ENCODE measurements at regions of chr7 and their contacts with region 1.

Region 1: GRCh38 chr7:28020302-28020940 is 160.2 kb downstream of the JAZF1 start:
- DNase-seq: peak; percentile 52 to 75 (median 64)
- ATAC-seq: peak; percentile 49 to 83 (median 76)
- H3K4me3 ChIP-seq: no peak overlapping the region
- H3K27ac ChIP-seq: no peak overlapping the region
- H3K4me1 ChIP-seq: peaks cover 0 to 49% (median 19%) of the 10 kb centered on the region in 12 donors
- H3K27me3 ChIP-seq: no peaks in the 10 kb centered on the region
- CTCF ChIP-seq: peak; percentile 81 to 92 (median 87)
- POLR2A ChIP-seq: no peak

Region 2: DNA sequence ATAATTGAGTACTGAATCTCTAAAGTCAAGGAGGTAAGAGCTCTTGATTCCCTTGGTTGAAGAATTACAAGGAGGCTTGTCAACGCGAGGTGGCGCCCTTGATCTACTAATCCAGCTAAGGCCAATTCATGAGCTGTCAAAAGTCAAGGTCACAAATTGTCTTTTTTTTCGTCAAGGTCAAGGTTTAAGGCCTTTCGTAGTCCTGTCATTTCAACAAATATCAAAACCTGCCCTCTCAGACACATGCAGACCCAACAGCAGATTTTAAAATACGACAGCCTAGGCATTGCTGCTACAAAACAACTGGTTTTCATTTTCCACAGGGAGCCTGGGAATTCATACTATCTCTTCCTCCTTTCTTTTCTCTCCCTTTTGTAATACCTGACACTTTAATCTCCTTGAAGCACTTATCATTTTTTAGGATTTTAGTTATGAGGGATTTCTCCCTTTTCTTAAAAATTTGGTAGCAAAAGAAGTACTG is 824.1 kb before region 1 on chr7:
- intact Hi-C with region 1: loop called (anchors 2 to 10 kb)
- DNase-seq: peak in 4 of 5 donors; percentile 69 to 86 (median 74)
- ATAC-seq: peak in 2 of 4 donors; percentile 54 to 70
- H3K4me3 ChIP-seq: no peak overlapping the region
- H3K27ac ChIP-seq: peak overlapping the region in 1 of 12 donors; percentile 91
- H3K4me1 ChIP-seq: peaks cover 4 to 50% (median 23%) of the 10 kb centered on the region in 12 donors
- H3K27me3 ChIP-seq: peaks cover 83 to 98% (median 91%) of the 10 kb centered on the region in 9 donors
- CTCF ChIP-seq: peak; percentile 55 to 85 (median 74)
- POLR2A ChIP-seq: no peak

Region 3: DNA sequence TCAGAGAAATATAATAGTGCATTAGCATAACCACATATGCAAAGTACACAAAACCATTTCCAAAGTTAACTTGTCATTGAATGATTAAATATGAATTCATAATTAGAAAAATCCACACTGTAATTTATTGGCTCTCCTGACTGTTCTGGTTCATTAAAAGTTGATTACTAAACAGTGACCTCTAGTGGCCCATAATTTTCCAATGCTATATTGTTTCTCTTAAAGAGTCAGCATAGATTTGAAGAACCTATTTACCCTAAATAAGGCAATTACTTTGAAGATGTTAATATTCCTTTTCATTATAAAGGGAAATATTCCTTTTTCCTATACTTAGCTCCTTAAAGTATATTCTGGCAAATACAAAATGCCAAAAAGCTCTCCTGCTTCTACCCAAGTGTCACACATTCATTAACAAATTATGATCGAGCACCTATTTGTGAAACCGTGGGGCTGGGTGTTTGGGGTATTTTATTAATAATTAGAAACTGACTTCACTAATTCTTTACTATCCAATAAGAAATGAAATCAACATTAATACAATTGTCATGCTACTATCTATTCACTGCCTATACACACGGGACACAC is 444.0 kb before region 1 on chr7:
- intact Hi-C with region 1: loop called in 1 of 10 experiments (anchors 10 kb)
- DNase-seq: no peak
- ATAC-seq: peak in 2 of 4 donors; percentile 48 to 62
- H3K4me3 ChIP-seq: no peak overlapping the region
- H3K27ac ChIP-seq: no peak overlapping the region
- H3K4me1 ChIP-seq: no peaks in the 10 kb centered on the region
- H3K27me3 ChIP-seq: no peaks in the 10 kb centered on the region
- CTCF ChIP-seq: peak; percentile 48 to 77 (median 66)
- POLR2A ChIP-seq: no peak

Region 4: DNA sequence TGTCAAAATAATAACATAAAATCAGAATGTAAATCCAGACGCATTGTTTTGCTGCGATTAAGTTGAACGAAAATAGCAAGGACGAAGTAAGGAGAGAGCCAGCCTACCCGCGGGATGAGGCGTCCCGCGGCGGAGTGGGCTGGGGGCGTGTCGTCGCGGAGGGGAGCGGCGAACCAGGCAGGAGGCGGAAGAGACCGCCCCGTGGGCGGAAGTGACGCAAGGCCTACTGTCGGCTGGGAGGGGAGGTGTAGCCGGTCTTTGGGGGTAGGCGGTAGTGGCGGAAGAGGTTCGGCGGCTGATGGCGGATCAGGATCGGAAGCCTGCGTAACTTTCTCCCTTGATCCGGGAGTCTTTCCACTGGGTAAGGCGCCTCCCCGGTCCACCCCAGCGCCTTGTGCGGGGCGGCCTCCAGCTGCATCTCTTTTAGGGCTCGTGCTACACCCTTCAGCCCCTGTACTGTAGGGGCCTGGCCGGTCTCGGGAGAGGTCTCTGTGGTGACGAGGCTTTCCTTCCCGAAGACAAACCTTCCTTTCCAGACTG is 280.4 kb before region 1 on chr7 and contains the start of gene TAX1BP1:
- intact Hi-C with region 1: loop called in 3 of 10 experiments (anchors 5 to 10 kb)
- DNase-seq: peak; percentile 96 to 98 (median 97)
- ATAC-seq: peak; percentile 100
- H3K4me3 ChIP-seq: peak within 1 kb of the TSS; percentile 75 to 99 (median 91)
- H3K27ac ChIP-seq: peak within 1 kb of the TSS; percentile 86 to 99 (median 96)
- H3K4me1 ChIP-seq: peaks cover 0 to 38% (median 22%) of the 10 kb centered on the region in 12 donors
- H3K27me3 ChIP-seq: no peaks in the 10 kb centered on the region
- CTCF ChIP-seq: no peak
- POLR2A ChIP-seq: peak; percentile 54 to 94
- total RNA-seq, gene TAX1BP1: 128 to 190 (median 173) TPM

Region 5: GRCh38 chr7:27808626-27809025 is 211.8 kb before region 1 on chr7:
- intact Hi-C with region 1: loop called in 1 of 10 experiments (anchors 10 kb)
- DNase-seq: no peak
- ATAC-seq: peak; percentile 68 to 88 (median 78)
- H3K4me3 ChIP-seq: no peak overlapping the region
- H3K27ac ChIP-seq: peak overlapping the region in 8 of 12 donors; percentile 5 to 39 (median 22)
- H3K4me1 ChIP-seq: peaks cover 0 to 17% (median 9%) of the 10 kb centered on the region in 12 donors
- H3K27me3 ChIP-seq: no peaks in the 10 kb centered on the region
- CTCF ChIP-seq: no peak
- POLR2A ChIP-seq: no peak

Region 6: DNA sequence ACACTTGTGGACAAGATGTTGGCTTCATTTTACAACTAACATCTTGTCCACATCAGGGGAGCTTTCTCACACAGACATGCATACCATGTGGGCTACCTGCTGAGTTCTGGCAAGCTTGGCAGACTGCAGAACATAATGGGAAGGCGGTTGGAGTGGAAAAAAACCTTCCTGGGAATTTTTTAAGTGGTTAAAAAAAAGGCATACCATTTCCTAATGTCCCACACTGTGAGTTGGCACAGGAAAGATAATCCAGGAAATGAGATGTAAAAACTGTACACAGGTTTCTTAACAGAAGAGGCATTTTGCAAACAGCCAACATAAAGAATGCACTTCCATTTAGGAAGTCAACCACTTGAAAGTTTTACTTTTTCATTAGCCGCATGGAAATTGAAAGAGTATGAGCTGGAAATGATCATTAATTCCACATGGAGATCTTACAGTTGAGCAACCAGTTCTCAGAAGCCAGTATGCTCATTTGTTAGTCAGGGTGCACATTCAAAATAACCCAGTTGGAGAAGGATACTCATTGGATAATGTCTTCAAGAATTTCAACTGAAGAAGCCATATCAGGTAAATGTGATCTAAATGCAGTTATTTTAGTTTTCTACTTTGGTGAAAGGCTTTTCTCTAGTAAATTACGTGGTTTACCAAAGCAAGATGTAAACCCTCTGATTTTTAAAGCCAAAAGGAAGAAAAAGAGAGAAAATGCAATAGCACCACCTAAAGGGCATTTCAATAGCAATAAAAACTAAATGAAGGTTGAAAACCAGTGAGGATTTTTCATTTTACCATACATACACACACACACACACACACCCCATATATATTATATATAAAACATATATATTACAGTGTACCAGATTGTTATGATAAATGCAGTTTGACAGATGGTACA is 86.5 kb before region 1 on chr7:
- intact Hi-C with region 1: loop called in 2 of 10 experiments (anchors 5 to 10 kb)
- DNase-seq: no peak
- ATAC-seq: no peak
- H3K4me3 ChIP-seq: no peak overlapping the region
- H3K27ac ChIP-seq: no peak overlapping the region
- H3K4me1 ChIP-seq: peaks cover 0 to 9% (median 0%) of the 10 kb centered on the region in 12 donors
- H3K27me3 ChIP-seq: no peaks in the 10 kb centered on the region
- CTCF ChIP-seq: peak in 6 of 12 donors; percentile 10 to 39 (median 21)
- POLR2A ChIP-seq: no peak